GM13976 (cell line): ENCODE measurements at regions of chr11 and their contacts with region 1.

Region 1: DNA sequence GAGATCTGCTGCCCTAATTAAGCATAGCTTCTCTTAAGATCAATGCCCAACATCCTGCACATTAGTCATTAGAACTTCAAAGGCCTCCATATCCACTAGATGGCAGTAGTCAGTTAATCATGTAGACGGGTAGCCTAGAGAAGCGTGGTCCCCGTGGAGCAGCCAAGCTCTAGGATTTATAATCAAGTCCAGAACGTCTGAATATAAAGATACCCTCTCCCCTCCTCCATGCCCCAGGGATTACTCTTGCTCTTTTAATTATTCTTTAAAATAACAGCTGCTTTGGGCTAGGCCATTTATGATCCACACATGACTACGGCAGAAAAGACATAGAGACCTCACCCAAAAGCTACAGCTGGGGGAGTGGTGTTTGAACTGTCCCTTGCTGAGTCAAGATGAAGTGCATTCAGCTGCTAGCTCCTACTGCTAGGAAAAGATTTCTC is 327.6 kb upstream of the PLET1 start:
- DNase-seq: peak; percentile 43
- CTCF ChIP-seq: peak; percentile 74

Region 2: DNA sequence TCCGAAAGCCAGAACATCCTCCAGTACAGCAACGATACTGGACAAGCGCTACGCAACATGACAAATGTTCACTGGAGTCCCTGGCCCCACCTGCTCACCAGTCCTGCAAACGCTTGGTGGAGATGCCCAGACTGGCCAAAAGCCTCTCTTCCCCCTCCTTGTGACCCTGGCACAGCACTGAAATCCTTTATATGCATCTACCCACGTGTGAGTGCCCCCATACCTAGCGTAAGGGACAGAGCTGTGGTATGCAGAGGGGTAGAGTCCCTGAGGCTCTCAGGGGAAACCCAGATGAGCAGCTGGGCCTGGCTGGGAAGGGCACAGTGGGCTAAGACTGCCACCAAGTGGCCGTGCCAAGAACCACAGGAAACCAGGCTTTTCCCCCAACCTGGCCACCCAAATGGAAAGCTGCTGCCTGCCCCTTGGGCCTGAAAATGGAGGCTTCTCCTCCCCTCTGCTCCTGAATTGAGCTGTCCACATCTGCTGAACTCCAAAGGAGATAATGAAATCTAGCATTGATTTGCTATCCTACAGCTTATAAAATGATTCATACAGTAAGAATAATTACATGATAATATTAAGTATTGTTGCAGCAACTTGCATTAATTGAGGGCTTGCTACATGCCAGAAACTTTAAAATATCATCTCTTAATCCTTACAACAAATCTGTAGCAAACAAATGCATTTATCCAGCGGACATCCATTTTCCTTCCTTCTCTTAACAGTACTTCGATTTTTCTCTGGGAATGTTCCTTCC is 701.3 kb after region 1 on chr11:
- in situ Hi-C with region 1: loop called (anchors 10 kb)
- DNase-seq: peak; percentile 79
- CTCF ChIP-seq: peak; percentile 84